A673 (cell line): ENCODE measurements at regions of chr1 and their contacts with region 1.

Region 1: DNA sequence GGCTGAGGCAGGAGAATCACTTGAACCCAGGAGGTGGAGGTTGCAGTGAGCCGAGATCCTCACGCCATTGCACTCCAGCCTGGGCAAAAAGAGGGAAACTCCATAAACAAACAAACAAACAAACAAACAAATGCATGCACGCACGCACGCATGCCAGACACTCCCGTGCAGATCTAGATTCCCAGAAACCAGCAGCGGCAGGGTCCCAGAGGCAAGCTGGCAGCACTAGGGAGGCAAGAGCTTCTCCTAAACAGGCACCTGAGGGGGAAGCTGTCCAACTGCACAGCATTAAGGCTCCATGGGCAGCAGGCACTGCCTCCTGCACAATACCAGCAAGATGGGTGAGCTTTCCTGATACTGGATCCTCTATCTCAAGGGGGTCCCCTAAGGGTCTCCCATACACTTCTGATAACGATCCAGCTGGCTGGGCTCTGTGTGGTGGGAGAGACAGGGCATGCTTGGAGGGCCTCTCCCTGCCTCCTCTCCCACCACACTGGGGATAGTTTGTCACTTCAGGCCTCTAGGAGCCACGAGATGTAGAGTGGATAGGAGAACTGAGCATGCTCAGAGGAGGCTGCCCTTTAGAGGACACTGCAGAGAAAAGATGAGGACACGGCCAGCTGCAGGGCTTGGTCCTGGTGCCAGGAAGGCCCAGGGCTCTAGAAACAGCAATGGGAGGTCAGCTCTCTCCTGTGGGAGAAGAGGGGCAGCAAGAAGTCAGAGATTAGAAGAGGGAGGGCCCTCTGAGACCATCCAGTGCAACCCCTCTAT is 25.9 kb downstream of the SLC9A1 start:
- DNase-seq: no peak
- H3K4me3 ChIP-seq: no peak overlapping the region
- H3K27ac ChIP-seq: no peak overlapping the region
- H3K4me1 ChIP-seq: no peaks in the 10 kb centered on the region
- H3K27me3 ChIP-seq: no peaks in the 10 kb centered on the region
- CTCF ChIP-seq: no peak

Region 2: DNA sequence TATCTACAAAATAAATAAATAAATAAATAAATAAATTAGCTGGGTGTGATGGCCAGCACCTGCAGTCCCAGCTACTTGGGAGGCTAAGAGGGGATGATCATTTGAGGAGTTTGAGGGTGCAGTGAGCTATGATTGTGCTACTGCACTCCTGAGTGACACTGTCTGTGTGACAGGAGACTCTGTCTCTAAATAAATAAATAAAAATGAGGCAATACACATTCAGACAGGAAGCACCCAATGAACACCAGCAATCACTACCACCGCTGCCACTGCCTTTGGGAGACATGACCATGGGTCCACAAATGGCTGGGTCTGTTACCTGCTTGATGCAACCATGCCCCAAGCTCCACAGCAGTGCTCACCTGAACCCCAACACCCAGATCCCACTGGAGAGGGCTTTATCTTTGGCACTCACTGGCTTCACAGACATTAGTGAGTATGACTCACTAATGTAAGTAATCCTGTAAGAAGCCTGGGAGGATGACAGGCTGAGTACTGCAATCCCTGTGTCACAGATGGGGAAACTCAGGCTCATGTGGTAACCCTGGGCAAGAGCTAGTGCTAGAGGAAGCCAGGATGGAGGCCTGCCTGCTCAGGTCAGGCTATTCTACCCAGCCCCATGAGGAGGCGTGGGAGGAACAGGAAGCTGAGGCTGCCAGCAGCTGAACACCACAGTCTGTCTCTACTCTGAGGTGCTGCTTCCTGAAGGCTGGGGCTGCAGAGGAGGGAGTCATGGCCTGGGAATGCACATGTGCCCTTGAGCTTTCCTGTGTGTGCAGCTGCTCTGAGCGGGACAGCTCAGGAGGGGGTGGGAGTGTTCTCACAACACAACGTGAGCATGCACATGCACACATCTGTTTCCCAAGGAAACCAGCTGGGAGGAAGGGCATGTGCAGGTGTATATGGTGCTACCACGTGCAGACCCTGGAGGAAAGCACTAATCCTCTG is 17.1 kb before region 1 on chr1:
- CTCF ChIA-PET with region 1: no interaction called
- POLR2A ChIA-PET with region 1: no interaction called
- intact Hi-C with region 1: no loop called
- DNase-seq: peak; percentile 91
- H3K4me3 ChIP-seq: no peak overlapping the region
- H3K27ac ChIP-seq: peak overlapping the region; percentile 49
- H3K4me1 ChIP-seq: peaks cover 22% of the 10 kb centered on the region
- H3K27me3 ChIP-seq: no peaks in the 10 kb centered on the region
- CTCF ChIP-seq: no peak

Region 3: GRCh38 chr1:27316860-27317259 is 187.8 kb after region 1 on chr1:
- CTCF ChIA-PET with region 1: interaction called, 13 read pairs
- POLR2A ChIA-PET with region 1: no interaction called
- intact Hi-C with region 1: no loop called
- DNase-seq: no peak
- H3K4me3 ChIP-seq: no peak overlapping the region
- H3K27ac ChIP-seq: no peak overlapping the region
- H3K4me1 ChIP-seq: peaks cover 8% of the 10 kb centered on the region
- H3K27me3 ChIP-seq: no peaks in the 10 kb centered on the region
- CTCF ChIP-seq: no peak